ENCODE measurements at regions of chr7 and their contacts with region 1.

Region 1: DNA sequence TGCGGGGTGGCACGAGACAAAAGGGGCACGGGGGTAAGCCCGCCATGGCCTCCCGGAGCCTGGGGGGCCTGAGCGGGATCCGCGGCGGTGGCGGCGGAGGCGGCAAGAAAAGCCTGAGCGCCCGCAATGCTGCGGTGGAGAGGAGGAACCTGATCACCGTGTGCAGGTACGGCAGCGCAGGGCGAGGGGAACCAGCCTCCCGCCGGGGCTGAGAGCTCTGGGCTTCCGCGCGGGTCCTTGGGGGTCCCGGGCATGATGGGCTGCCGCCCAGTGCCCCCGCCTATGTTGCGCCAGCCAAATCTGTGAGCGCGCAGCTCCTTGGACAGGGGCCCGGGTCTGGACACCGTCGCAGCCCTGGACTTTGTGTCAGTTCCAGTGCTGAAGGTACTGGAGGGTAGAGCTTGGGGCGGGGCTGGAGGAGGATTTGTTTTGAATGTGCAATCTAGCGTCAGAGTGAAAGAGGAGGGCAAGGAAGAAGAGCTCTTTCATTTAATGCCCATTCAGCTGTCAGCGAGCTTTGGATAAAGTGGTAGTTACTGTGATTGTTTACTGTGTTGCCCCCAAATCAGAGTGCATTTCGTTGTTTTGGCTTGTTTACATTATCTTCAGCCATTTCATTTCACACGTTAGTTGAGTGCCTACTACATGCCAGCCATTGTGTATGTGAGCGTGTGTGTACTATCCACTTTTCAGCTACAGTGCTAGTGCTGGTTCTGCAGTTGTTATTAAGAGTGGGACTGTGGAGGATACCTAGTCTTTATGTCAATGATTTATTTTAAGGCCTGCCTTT is 777 bp downstream of the RUNDC3B start:
- DNase-seq: peak in 8 of 9 donors; percentile 15 to 51 (median 36)
- ATAC-seq: peak; percentile 29
- H3K4me3 ChIP-seq: peak overlapping the region; percentile 64
- H3K4me3 Mint-ChIP-seq: peak overlapping the region; percentile 74 to 92 (median 83)
- H3K27ac ChIP-seq: peak overlapping the region; percentile 38
- H3K27ac Mint-ChIP-seq: peak overlapping the region in 5 of 9 donors; percentile 30 to 83 (median 54)
- H3K4me1 ChIP-seq: peaks cover 0 to 5% of the 10 kb centered on the region in 2 donors
- H3K4me1 Mint-ChIP-seq: peaks cover 7 to 14% (median 10%) of the 10 kb centered on the region in 7 donors
- H3K27me3 ChIP-seq: no peaks in the 10 kb centered on the region
- H3K27me3 Mint-ChIP-seq: peaks cover 4 to 32% (median 21%) of the 10 kb centered on the region in 5 donors

Region 2: GRCh38 chr7:87312215-87312865 is 316.6 kb before region 1 on chr7:
- CTCF ChIA-PET with region 1: no interaction called
- POLR2A ChIA-PET with region 1: no interaction called
- intact Hi-C with region 1: loop called in 1 of 2 experiments (anchors 10 kb)
- DNase-seq: peak; percentile 25 to 70 (median 55)
- ATAC-seq: peak; percentile 98
- H3K4me3 ChIP-seq: no peak overlapping the region
- H3K4me3 Mint-ChIP-seq: no peak overlapping the region
- H3K27ac ChIP-seq: no peak overlapping the region
- H3K27ac Mint-ChIP-seq: no peak overlapping the region
- H3K4me1 ChIP-seq: peaks cover 0 to 4% of the 10 kb centered on the region in 2 donors
- H3K4me1 Mint-ChIP-seq: peaks cover 0 to 3% (median 0%) of the 10 kb centered on the region in 7 donors
- H3K27me3 ChIP-seq: no peaks in the 10 kb centered on the region
- H3K27me3 Mint-ChIP-seq: peaks cover 0 to 12% (median 0%) of the 10 kb centered on the region in 5 donors

Region 3: DNA sequence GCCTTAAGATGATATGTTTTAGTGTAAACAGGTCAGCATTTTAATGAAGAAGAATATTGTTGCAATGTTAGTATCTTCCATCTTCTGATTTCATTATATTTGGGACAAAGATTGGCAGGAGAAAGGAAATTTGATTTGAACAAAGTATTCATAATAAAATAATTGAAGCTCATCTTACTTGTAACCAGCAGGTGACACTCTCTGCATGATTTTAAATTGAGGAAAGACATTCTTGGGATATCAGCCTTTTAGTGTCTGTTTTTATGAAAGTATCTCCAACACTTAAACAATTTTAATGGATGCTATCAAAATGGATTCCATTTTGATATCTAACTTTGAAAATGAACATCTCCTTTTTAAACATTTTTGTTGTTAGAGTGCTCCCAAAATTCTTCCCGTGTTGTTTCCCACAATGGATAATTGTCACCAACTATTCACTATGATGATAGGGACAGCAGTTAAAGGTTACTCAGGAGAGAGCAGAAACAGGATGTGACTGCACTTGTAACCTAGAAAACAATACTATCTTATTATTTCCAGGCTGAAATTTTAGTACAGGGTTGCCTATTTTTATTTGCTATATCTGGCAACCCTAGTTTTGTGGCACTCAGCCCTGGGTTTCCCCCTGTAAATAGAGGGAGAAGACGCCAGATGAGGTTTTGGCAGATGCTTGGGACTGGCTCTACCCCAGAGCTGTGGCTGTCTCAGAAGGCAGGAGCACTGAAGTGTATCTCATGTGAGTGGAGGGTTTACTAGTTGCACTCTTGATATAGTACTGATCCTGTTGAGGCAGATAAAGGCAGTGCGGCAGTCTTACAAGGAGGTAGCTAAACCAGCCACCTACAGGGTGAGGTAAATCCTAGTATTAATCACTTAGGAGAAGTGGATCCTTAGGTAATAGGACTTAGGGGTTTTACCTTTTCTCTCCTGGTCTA is 122.5 kb before region 1 on chr7:
- CTCF ChIA-PET with region 1: no interaction called
- POLR2A ChIA-PET with region 1: no interaction called
- intact Hi-C with region 1: loop called (anchors 2 to 10 kb)
- DNase-seq: peak in 3 of 9 donors; percentile 4 to 14 (median 12)
- ATAC-seq: no peak
- H3K4me3 ChIP-seq: no peak overlapping the region
- H3K4me3 Mint-ChIP-seq: no peak overlapping the region
- H3K27ac ChIP-seq: no peak overlapping the region
- H3K27ac Mint-ChIP-seq: no peak overlapping the region
- H3K4me1 ChIP-seq: no peaks in the 10 kb centered on the region
- H3K4me1 Mint-ChIP-seq: peaks cover 0 to 16% (median 0%) of the 10 kb centered on the region in 7 donors
- H3K27me3 ChIP-seq: no peaks in the 10 kb centered on the region
- H3K27me3 Mint-ChIP-seq: no peaks in the 10 kb centered on the region

Region 4: DNA sequence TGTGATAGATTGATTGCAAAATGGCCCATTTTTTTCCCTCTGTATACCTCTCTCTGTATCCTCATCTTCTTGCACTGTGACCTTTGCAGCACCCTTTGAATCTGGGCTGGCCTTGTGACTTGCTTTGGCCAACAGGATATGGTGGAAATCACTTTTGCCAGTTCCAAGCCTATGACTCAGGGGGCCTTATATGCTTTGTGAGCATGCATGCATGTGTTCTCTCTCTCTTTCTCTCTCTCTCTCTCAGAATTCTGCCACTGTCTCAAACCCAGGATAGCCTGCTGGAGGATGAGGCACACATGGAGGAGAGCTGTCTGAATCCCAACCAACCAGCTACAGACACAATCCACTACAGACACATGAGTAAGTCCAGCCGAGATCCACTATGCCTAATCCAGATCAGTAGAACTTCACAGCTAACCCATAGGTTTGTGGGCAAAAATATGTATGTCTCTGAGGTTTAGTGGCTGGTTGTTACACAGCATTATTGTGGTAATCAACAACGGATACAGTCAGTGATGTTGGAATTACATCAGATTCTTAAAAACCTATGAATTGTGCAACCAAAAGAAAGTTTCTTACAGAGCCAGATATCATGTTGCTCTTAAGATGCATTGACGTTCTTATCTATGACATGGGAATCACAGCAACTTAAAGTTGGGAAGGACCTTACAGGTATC is 111.7 kb before region 1 on chr7:
- CTCF ChIA-PET with region 1: no interaction called
- POLR2A ChIA-PET with region 1: no interaction called
- intact Hi-C with region 1: no loop called
- DNase-seq: no peak
- ATAC-seq: peak; percentile 12
- H3K4me3 ChIP-seq: no peak overlapping the region
- H3K4me3 Mint-ChIP-seq: no peak overlapping the region
- H3K27ac ChIP-seq: no peak overlapping the region
- H3K27ac Mint-ChIP-seq: no peak overlapping the region
- H3K4me1 ChIP-seq: no peaks in the 10 kb centered on the region
- H3K4me1 Mint-ChIP-seq: no peaks in the 10 kb centered on the region
- H3K27me3 ChIP-seq: no peaks in the 10 kb centered on the region
- H3K27me3 Mint-ChIP-seq: no peaks in the 10 kb centered on the region

Region 5: DNA sequence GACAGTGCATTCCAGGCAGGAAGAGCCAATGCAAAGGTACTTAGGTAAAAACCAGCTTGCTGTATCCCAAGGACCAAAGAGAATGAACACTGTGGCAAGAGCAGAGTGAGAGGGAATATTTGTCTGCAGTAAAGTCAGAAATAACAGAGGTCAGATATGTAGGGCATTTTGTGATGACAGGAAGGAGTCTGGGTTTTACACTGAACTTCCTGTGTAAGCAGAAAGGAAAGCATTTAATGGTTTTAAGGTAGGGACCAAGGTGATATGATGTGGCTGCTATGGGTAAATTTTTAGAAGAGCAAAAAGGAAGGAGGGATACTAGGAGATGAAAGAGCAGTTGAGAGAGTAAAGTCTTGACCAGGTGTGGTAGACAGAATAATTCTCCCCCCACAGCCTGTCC is 38.4 kb before region 1 on chr7:
- CTCF ChIA-PET with region 1: no interaction called
- POLR2A ChIA-PET with region 1: no interaction called
- intact Hi-C with region 1: loop called in 1 of 2 experiments (anchors 5 kb)
- DNase-seq: no peak
- ATAC-seq: peak; percentile 58
- H3K4me3 ChIP-seq: no peak overlapping the region
- H3K4me3 Mint-ChIP-seq: no peak overlapping the region
- H3K27ac ChIP-seq: no peak overlapping the region
- H3K27ac Mint-ChIP-seq: no peak overlapping the region
- H3K4me1 ChIP-seq: peaks cover 3 to 11% of the 10 kb centered on the region in 2 donors
- H3K4me1 Mint-ChIP-seq: peaks cover 7 to 18% (median 13%) of the 10 kb centered on the region in 7 donors
- H3K27me3 ChIP-seq: no peaks in the 10 kb centered on the region
- H3K27me3 Mint-ChIP-seq: no peaks in the 10 kb centered on the region

Region 6: GRCh38 chr7:87600130-87601124 is 28.5 kb before region 1 on chr7 and contains the start of gene ABCB1:
- CTCF ChIA-PET with region 1: no interaction called
- POLR2A ChIA-PET with region 1: interaction called, 4 read pairs
- intact Hi-C with region 1: loop called (anchors 1 to 2 kb)
- DNase-seq: peak; percentile 19 to 60 (median 49)
- ATAC-seq: peak; percentile 85
- H3K4me3 ChIP-seq: peak within 1 kb of the TSS; percentile 82
- H3K4me3 Mint-ChIP-seq: peak within 1 kb of the TSS; percentile 76 to 95 (median 85)
- H3K27ac ChIP-seq: peak within 1 kb of the TSS; percentile 68
- H3K27ac Mint-ChIP-seq: peak within 1 kb of the TSS; percentile 29 to 89 (median 81)
- H3K4me1 ChIP-seq: peaks cover 3 to 6% of the 10 kb centered on the region in 2 donors
- H3K4me1 Mint-ChIP-seq: peaks cover 13 to 45% (median 28%) of the 10 kb centered on the region in 7 donors
- H3K27me3 ChIP-seq: no peaks in the 10 kb centered on the region
- H3K27me3 Mint-ChIP-seq: peaks cover 0 to 50% (median 45%) of the 10 kb centered on the region in 5 donors
- total RNA-seq, gene ABCB1: 3.0 to 14.3 (median 10.4) TPM

Region 7: DNA sequence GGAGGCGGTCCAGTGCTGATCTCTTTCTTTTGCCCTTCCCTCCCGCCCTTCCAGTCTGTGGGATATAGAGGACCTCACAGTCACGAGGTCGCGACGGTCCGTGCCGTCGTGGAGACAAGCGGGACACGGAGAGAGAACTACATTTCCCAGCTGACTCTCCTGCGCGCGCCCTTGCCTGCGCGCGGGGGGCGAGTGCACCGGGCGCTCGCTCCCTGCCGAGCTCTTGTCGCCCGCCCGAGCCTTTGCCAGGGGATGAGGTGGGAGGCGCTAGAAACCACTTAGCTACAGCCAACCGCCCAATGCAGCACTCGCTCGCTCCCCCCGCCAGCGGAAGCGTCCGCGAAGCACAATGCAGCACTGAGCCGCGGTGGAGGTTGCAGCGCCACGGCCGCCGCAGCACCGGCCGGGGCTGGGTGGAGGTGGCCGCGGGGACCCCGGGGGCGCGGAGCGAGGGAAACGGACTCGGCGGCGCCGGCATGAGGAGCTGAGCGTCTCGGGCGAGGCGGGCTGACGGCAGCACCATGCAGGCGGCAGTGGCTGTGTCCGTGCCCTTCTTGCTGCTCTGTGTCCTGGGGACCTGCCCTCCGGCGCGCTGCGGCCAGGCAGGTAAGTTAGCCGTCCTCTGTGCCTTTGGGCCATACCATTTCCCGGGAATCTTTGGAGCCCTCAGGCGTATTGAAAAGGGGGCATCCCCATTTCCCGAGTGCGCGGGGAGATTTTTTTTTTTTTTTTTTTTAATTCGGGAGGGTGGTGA is 305.1 kb after region 1 on chr7 and contains the start of gene ADAM22:
- CTCF ChIA-PET with region 1: no interaction called
- POLR2A ChIA-PET with region 1: no interaction called
- intact Hi-C with region 1: loop called in 1 of 2 experiments (anchors 2 kb)
- DNase-seq: peak; percentile 49 to 80 (median 74)
- ATAC-seq: peak; percentile 96
- H3K4me3 ChIP-seq: peak within 1 kb of the TSS; percentile 80
- H3K4me3 Mint-ChIP-seq: peak within 1 kb of the TSS; percentile 84 to 93 (median 91)
- H3K27ac ChIP-seq: peak within 1 kb of the TSS; percentile 19
- H3K27ac Mint-ChIP-seq: peak within 1 kb of the TSS in 7 of 9 donors; percentile 13 to 82 (median 65)
- H3K4me1 ChIP-seq: peaks cover 4 to 6% of the 10 kb centered on the region in 2 donors
- H3K4me1 Mint-ChIP-seq: peaks cover 0 to 21% (median 12%) of the 10 kb centered on the region in 7 donors
- H3K27me3 ChIP-seq: no peaks in the 10 kb centered on the region
- H3K27me3 Mint-ChIP-seq: peaks cover 0 to 54% (median 4%) of the 10 kb centered on the region in 5 donors
- total RNA-seq, gene ADAM22: 1.1 to 7.1 (median 3.1) TPM

Region 8: DNA sequence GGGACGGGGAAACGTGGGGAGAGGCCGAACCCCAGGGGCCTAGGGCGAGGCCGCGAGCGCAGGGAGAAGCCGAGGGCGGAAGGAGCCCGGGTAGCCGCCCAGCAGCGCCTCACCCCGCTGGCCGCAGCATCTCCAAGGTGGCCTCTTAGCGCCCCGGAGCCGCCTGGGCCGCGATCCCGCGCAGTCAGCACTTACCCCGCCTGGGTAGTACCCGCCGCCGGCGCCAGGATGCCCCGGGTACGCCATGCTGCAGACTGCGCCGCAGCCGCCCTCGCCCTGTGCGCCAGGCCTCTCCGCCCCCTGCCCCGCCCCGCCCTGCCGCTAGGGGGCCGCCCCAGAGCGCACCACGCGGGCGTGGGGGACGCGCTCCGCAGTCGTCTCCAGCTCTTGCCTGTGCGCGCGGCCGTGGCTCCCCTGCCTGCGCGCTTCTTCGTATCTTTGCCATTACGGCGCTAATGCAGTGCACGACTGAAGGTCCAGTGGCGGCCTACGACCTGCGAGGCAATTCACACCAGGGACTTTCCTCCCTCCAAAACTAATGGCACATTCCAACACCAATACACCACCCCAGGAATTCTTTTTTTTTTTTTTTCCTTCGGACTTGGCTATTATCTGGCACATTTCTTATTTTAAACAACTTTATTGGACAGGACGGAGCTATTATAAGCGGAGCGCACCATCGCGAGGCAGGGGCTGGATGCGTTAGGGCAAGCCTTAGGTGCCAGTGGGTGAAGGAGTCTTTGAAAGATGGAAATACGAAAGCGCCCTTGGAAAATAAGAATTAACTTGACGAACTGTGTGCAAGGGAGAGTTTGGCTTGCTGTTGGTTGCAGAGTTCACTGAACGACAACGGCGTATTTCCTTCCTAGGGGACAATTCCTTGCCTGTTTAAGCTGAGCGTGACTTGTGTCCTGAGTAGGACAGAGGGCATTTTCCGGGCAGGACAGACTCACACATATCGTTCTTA is 591.1 kb after region 1 on chr7 and contains the start of gene SRI:
- CTCF ChIA-PET with region 1: no interaction called
- POLR2A ChIA-PET with region 1: no interaction called
- intact Hi-C with region 1: loop called in 1 of 2 experiments (anchors 5 kb)
- DNase-seq: peak; percentile 85 to 95 (median 93)
- ATAC-seq: peak; percentile 98
- H3K4me3 ChIP-seq: peak within 1 kb of the TSS; percentile 97
- H3K4me3 Mint-ChIP-seq: peak within 1 kb of the TSS; percentile 95 to 99 (median 96)
- H3K27ac ChIP-seq: peak within 1 kb of the TSS; percentile 86
- H3K27ac Mint-ChIP-seq: peak within 1 kb of the TSS; percentile 90 to 99 (median 94)
- H3K4me1 ChIP-seq: peaks cover 15 to 18% of the 10 kb centered on the region in 2 donors
- H3K4me1 Mint-ChIP-seq: peaks cover 13 to 42% (median 34%) of the 10 kb centered on the region in 7 donors
- H3K27me3 ChIP-seq: peaks cover 0 to 4% of the 10 kb centered on the region in 2 donors
- H3K27me3 Mint-ChIP-seq: peaks cover 0 to 8% (median 0%) of the 10 kb centered on the region in 5 donors
- total RNA-seq, gene SRI: 39.9 to 131 (median 60.0) TPM

Measured in naive thymus-derived CD4-positive, alpha-beta T cell (primary cell).